H1 (cell line): ENCODE measurements at regions of chr17 and their contacts with region 1.

Region 1: DNA sequence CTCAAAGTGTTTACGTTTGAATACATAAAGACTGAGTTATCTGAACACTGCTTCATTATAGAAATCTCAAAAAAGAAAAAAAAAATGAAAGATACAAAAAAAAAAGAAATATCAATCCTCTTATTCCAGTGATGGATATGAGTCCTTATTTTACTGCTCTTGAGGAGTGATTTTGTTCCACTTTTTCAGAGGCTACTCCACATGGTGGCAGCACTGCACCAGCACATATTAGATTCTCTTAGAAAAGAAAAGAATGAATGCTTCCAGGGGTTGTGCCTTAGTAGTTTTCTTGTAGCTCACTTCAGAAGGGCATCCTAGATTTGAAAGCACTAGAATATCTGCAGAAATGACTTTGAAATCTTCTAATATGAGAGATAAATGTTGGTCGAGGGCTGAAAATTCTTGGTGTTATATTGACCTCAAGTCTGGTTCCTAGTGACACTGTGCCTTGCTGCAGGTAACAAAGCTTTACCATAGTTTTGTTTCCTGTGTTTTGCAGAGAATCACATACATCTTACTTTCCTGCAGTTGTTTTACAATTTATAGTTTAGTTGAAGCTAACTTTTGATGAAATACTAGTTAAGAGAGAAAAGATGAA is 25.9 kb downstream of the AP2B1 start:
- DNase-seq: peak in 1 of 2 experiments; percentile 55
- H3K4me3 ChIP-seq: no peak overlapping the region
- H3K27ac ChIP-seq: no peak overlapping the region
- H3K4me1 ChIP-seq: no peaks in the 10 kb centered on the region
- H3K27me3 ChIP-seq: no peaks in the 10 kb centered on the region
- CTCF ChIP-seq: peak in 2 of 3 experiments; percentile 50 to 69; a peak in 2 of 4 replicates
- EP300 ChIP-seq: no peak
- POLR2A ChIP-seq: no peak
- RAD21 ChIP-seq: peak; percentile 70

Region 2: GRCh38 chr17:35596530-35597233 is 16.3 kb before region 1 on chr17:
- CTCF ChIA-PET with region 1: interaction called, 19 read pairs
- POLR2A ChIA-PET with region 1: interaction called, 3 read pairs
- DNase-seq: peak; percentile 47 to 82
- H3K4me3 ChIP-seq: 0 out of 8 replicates have a peak overlapping the region, but pooled peaks of 1 of the 4 experiments have one; percentile 0
- H3K27ac ChIP-seq: no peak overlapping the region
- H3K4me1 ChIP-seq: no peaks in the 10 kb centered on the region
- H3K27me3 ChIP-seq: no peaks in the 10 kb centered on the region
- CTCF ChIP-seq: peak; percentile 87 to 90 (median 89)
- EP300 ChIP-seq: peak in 1 of 2 experiments; percentile 36; a peak in 1 of 3 replicates
- POLR2A ChIP-seq: no peak
- RAD21 ChIP-seq: peak; percentile 43 to 58

Region 3: GRCh38 chr17:35630530-35631148 is 17.6 kb after region 1 on chr17:
- CTCF ChIA-PET with region 1: interaction called, 11 read pairs
- POLR2A ChIA-PET with region 1: no interaction called
- DNase-seq: no peak
- H3K4me3 ChIP-seq: no peak overlapping the region
- H3K27ac ChIP-seq: no peak overlapping the region
- H3K4me1 ChIP-seq: no peaks in the 10 kb centered on the region
- H3K27me3 ChIP-seq: no peaks in the 10 kb centered on the region
- CTCF ChIP-seq: no peak
- EP300 ChIP-seq: no peak
- POLR2A ChIP-seq: no peak
- RAD21 ChIP-seq: no peak

Region 4: GRCh38 chr17:35666967-35667532 is 54.0 kb after region 1 on chr17:
- CTCF ChIA-PET with region 1: interaction called, 19 read pairs
- POLR2A ChIA-PET with region 1: no interaction called
- DNase-seq: no peak
- H3K4me3 ChIP-seq: no peak overlapping the region
- H3K27ac ChIP-seq: no peak overlapping the region
- H3K4me1 ChIP-seq: no peaks in the 10 kb centered on the region
- H3K27me3 ChIP-seq: no peaks in the 10 kb centered on the region
- CTCF ChIP-seq: no peak
- EP300 ChIP-seq: no peak
- POLR2A ChIP-seq: no peak
- RAD21 ChIP-seq: no peak

Region 5: DNA sequence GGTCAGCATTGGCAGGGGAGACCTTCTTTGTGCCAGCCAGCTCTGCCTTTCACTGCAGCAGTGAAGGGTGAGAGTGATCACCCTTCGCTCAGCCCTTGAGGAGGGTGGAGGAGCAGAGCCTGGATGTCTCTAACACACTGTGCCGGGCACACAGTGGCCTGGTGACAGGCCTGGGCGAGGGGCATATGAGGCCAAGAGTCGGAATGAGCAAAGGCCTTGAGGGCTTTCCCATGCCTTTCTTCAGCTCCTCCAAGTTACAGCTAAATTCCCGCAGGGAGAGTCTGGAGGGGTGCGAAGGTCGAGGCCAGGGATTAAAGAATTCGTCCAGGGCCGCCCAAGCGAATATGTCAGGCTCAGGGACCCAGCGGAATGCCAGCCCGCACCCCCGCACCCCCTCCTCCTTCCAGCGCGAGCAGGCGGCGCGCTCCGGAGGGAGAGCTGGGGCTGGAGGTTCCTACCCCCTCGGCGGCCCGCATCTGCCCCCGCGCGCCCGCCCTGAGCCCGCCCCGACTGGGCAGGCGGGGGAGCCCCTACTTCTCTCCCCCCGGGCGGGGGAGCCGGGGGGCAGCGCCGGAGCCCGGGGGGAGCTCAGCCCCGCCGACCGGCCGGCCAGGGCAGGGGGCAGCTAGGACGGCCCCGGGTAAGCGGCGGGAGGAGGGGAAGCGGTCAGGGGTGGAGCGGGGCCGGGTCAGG is 118.4 kb after region 1 on chr17 and contains the start of gene RASL10B:
- CTCF ChIA-PET with region 1: interaction called, 45 read pairs
- POLR2A ChIA-PET with region 1: interaction called, 3 read pairs
- DNase-seq: peak in 1 of 2 experiments; percentile 85
- H3K4me3 ChIP-seq: peak within 1 kb of the TSS; percentile 67 to 85 (median 78)
- H3K27ac ChIP-seq: no peak within 1 kb of the TSS
- H3K4me1 ChIP-seq: peaks cover 7 to 26% (median 8%) of the 10 kb centered on the region in 4 experiments; a peak in 6 of 7 replicates
- H3K27me3 ChIP-seq: peaks cover 0 to 8% (median 5%) of the 10 kb centered on the region in 4 experiments; a peak in 4 of 7 replicates
- CTCF ChIP-seq: no peak
- EP300 ChIP-seq: no peak
- POLR2A ChIP-seq: no peak
- RAD21 ChIP-seq: no peak; a peak in 1 of 4 replicates
- total RNA-seq, gene RASL10B: 21.6 and 22.8 TPM in 2 replicates